ENCODE measurements at regions of chr14 and their contacts with region 1.

Region 1: DNA sequence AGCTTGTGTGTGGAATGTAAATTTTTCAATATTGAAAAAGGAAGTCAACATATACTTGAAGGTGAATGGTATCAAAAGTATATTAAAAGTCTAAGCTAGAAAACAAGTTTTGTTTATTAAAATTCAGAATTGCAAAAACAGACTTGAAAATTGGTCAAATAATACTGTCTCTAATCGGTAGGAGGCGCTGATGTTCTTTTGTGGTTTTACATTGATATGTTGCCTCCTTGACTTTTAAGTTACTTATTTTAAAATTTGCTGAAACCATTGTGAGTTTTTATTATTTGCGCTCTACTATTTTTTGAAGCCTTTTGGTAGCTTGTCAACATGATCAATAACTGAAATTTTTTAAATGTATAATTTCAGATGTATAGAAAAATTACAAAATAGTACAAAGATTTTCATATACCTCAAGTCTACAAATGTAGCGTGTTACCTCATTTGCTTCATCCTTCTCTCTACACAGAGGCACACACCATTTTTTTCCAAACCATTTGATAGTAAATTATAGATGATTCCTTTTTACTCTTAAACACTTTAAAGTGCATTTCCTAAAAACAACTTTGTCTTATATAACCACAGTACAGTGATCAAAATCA is 6.9 kb downstream of the RTRAF start:
- DNase-seq: peak in 1 of 2 experiments; percentile 54
- ATAC-seq: no peak
- H3K4me3 ChIP-seq: no peak overlapping the region
- H3K27ac ChIP-seq: no peak overlapping the region
- H3K4me1 ChIP-seq: peaks cover under 1% of the 10 kb centered on the region; the same call in 1 of the 3 replicates
- CTCF ChIP-seq: peak; percentile 70
- EP300 ChIP-seq: no peak
- POLR2A ChIP-seq: no peak
- RAD21 ChIP-seq: peak; percentile 60 to 74

Region 2: DNA sequence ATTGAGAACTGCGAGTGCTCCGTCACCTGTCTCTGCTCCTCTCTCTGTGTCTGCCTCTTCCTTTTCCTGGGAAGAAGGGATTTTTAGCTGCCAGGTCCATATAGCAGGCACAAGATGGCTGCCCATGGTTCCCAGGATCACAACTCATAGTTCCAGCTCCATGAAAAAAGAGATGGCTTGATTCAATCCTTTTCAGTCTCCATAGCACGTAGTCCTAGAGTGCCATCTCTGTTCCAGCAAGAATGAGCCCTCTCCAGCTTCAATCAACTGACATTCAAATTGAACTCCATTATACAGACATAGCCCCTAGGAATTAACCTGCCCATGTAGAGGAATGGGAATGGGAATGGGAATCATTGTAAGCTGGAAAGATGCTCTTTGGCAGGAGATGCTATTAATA is 41.6 kb before region 1 on chr14:
- CTCF ChIA-PET with region 1: no interaction called
- POLR2A ChIA-PET with region 1: no interaction called
- DNase-seq: no peak
- ATAC-seq: no peak
- H3K4me3 ChIP-seq: no peak overlapping the region
- H3K27ac ChIP-seq: no peak overlapping the region
- H3K4me1 ChIP-seq: no peaks in the 10 kb centered on the region
- CTCF ChIP-seq: no peak
- EP300 ChIP-seq: no peak
- POLR2A ChIP-seq: no peak
- RAD21 ChIP-seq: no peak

Region 3: GRCh38 chr14:52011523-52011922 is 15.3 kb after region 1 on chr14:
- CTCF ChIA-PET with region 1: interaction called, 21 read pairs
- POLR2A ChIA-PET with region 1: no interaction called
- DNase-seq: no peak
- ATAC-seq: no peak
- H3K4me3 ChIP-seq: no peak overlapping the region
- H3K27ac ChIP-seq: no peak overlapping the region
- H3K4me1 ChIP-seq: no peaks in the 10 kb centered on the region
- CTCF ChIP-seq: no peak
- EP300 ChIP-seq: no peak
- POLR2A ChIP-seq: no peak
- RAD21 ChIP-seq: no peak